Head of caudate nucleus (tissue), 42 donors: ENCODE measurements at regions of chr6 and their contacts with region 1.

Region 1: GRCh38 chr6:41416501-41416837 is 81.1 kb downstream of the NCR2 start:
- DNase-seq: no peak

Region 2: DNA sequence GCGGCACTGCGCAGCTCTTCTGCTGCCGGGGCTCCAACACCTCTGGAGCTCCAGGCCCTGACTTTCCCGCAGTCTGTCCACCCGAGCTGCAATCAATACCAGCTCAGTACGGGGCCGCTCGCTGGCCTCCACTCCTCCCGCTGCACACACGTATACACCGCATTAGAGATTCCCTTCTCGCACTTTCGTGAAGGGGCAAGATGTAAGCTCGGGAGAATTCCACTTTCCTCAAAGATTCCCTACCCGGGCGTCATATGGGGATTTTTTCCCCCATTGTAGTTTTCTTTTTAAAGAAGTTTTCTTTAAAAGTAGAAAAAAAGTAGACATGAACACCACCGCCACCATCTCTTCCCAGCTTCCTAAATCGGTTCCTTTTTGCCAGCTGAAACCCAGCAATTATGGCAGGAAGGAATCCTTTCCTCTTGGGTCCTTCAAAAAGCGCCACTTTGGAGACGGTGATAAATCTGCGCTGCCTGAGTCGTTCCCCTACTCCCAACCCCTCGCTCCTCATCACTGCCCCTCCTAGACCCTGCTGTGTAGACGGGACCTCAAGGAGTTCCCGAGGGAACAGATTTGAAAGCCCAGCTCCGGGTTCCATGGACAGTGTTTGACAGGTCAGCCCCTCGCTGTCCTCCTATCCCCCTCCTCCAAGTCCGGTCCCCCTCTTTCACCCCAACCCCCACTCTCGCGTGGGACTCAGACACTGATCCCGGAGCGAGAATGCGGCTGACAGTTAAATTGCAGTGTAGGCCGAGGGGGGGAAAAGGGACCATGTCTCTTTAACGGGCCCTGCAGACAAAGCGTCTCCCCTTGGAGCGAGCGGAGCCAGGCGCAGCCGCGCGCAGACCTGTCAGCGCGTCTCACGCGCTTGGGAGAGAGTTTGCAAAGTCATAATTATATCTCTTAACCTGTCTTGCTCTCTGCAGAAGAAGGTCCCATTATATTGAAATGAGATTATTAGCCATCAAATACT is 41.6 kb before region 1 on chr6:
- intact Hi-C with region 1: loop called (anchors 5 kb)
- DNase-seq: peak in 28 of 42 donors; percentile 9 to 65 (median 36)